Psoas muscle (tissue), 8 donors: ENCODE measurements at regions of chr15 and their contacts with region 1.

Region 1: DNA sequence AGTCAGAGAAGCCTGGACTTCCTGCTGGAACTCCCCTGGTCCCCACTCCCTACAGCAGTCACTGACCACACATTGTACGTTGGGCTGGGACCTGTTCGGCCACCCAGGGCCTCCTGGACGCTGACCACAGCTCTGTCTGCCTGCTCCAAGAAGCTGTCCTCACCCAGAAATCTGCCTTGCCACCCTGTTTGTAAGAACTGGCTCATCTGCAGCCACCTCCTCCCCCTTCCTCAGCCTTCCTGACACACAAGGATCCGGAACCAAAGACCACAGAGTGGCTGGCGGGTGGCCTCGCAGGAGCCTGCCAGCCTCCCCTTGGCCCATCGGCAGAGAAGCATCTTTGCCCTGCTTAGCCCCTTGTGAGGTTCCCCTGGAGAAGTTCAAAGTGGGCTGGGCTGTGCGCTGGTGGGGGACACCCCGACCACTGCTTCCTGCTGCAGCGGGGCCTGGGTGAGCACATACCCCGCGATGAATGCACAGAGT is 91.9 kb downstream of the PCSK6 start:
- DNase-seq: no peak
- ATAC-seq: no peak
- H3K4me3 ChIP-seq: no peak overlapping the region
- H3K27ac ChIP-seq: no peak overlapping the region
- H3K4me1 ChIP-seq: no peaks in the 10 kb centered on the region
- H3K27me3 ChIP-seq: no peaks in the 10 kb centered on the region
- CTCF ChIP-seq: no peak

Region 2: GRCh38 chr15:101318839-101319238 is 78.7 kb before region 1 on chr15:
- intact Hi-C with region 1: loop called in 1 of 2 experiments (anchors 1 kb)
- DNase-seq: no peak
- ATAC-seq: no peak
- H3K4me3 ChIP-seq: no peak overlapping the region
- H3K27ac ChIP-seq: no peak overlapping the region
- H3K4me1 ChIP-seq: no peaks in the 10 kb centered on the region
- H3K27me3 ChIP-seq: no peaks in the 10 kb centered on the region
- CTCF ChIP-seq: no peak